B cell (primary cell): ENCODE measurements at regions of chr3 and their contacts with region 1.

Region 1: DNA sequence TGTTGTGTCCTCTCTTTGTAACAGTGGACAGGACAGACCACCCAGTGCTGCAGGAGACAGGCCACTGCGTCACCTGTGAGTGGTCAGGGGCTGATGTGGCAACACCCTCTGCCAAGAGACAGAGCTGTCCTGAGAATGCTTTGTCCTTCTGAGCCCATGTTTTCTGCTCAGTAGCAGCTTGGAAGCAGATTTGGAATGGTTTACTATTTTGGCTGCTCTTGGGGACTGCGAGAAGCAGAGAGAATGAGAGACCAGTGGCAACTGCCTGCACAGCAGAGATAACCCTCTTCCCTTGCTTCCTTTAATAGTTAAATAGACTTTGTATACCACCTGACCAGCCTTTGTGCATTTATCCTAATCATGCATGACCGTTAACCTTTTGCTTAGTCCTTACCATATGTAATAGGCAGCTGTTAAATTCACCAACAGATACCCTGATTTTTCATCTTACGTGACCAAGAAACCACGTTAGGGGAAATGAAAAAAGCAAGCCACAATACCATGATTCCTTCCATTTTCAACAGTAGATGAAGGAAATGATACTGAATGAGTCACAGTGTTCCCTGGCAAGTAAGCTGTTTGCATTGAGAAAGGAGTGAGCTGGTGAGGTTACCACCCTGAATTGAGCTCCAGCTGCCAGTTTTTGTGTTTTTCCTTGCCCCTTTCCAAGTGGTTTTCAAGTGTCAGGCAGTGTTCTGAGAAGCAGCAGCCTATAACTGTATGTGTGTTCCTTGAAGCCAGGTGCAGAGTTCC is 35.5 kb downstream of the B3GALNT1 start:
- DNase-seq: peak; percentile 63
- ATAC-seq: peak; percentile 92
- H3K4me3 ChIP-seq: no peak overlapping the region
- H3K4me3 Mint-ChIP-seq: peak overlapping the region; percentile 64
- H3K27ac ChIP-seq: peak overlapping the region in 1 of 2 donors; percentile 45
- H3K27ac Mint-ChIP-seq: peak overlapping the region; percentile 73
- H3K4me1 ChIP-seq: peaks cover 39 to 43% of the 10 kb centered on the region in 2 donors
- H3K4me1 Mint-ChIP-seq: peaks cover 46% of the 10 kb centered on the region
- H3K27me3 ChIP-seq: no peaks in the 10 kb centered on the region
- H3K27me3 Mint-ChIP-seq: no peaks in the 10 kb centered on the region
- CTCF ChIP-seq: no peak

Region 2: GRCh38 chr3:160399125-160400029 is 670.3 kb before region 1 on chr3 and contains the starts of genes IFT80 and SMC4:
- CTCF ChIA-PET with region 1: no interaction called
- POLR2A ChIA-PET with region 1: no interaction called
- intact Hi-C with region 1: no loop called
- DNase-seq: peak; percentile 97
- ATAC-seq: peak; percentile 96
- H3K4me3 ChIP-seq: peak within 1 kb of the TSS; percentile 71 to 97 (median 85)
- H3K4me3 Mint-ChIP-seq: peak within 1 kb of the TSS; percentile 98
- H3K27ac ChIP-seq: peak within 1 kb of the TSS; percentile 69 to 97
- H3K27ac Mint-ChIP-seq: peak within 1 kb of the TSS; percentile 98
- H3K4me1 ChIP-seq: peaks cover 26 to 45% of the 10 kb centered on the region in 2 donors
- H3K4me1 Mint-ChIP-seq: peaks cover 43% of the 10 kb centered on the region
- H3K27me3 ChIP-seq: peaks cover 0 to 25% (median 7%) of the 10 kb centered on the region in 4 experiments
- H3K27me3 Mint-ChIP-seq: no peaks in the 10 kb centered on the region
- CTCF ChIP-seq: no peak
- total RNA-seq, gene IFT80: 44.1 and 47.0 TPM in 2 replicates
- total RNA-seq, gene SMC4: 53.8 and 55.1 TPM in 2 replicates

Region 3: GRCh38 chr3:160601288-160601687 is 468.4 kb before region 1 on chr3:
- CTCF ChIA-PET with region 1: no interaction called
- POLR2A ChIA-PET with region 1: no interaction called
- intact Hi-C with region 1: no loop called
- DNase-seq: no peak
- ATAC-seq: no peak
- H3K4me3 ChIP-seq: no peak overlapping the region
- H3K4me3 Mint-ChIP-seq: no peak overlapping the region
- H3K27ac ChIP-seq: no peak overlapping the region
- H3K27ac Mint-ChIP-seq: no peak overlapping the region
- H3K4me1 ChIP-seq: no peaks in the 10 kb centered on the region
- H3K4me1 Mint-ChIP-seq: no peaks in the 10 kb centered on the region
- H3K27me3 ChIP-seq: no peaks in the 10 kb centered on the region
- H3K27me3 Mint-ChIP-seq: peaks cover 14% of the 10 kb centered on the region
- CTCF ChIP-seq: no peak

Region 4: GRCh38 chr3:160754855-160755747 is 314.6 kb before region 1 on chr3:
- CTCF ChIA-PET with region 1: no interaction called
- POLR2A ChIA-PET with region 1: no interaction called
- intact Hi-C with region 1: loop called (anchors 10 kb)
- DNase-seq: peak; percentile 93
- ATAC-seq: peak; percentile 81
- H3K4me3 ChIP-seq: peak overlapping the region; percentile 68 to 86 (median 81)
- H3K4me3 Mint-ChIP-seq: peak overlapping the region; percentile 98
- H3K27ac ChIP-seq: peak overlapping the region; percentile 72 to 82
- H3K27ac Mint-ChIP-seq: peak overlapping the region; percentile 95
- H3K4me1 ChIP-seq: peaks cover 25% of the 10 kb centered on the region in 2 donors
- H3K4me1 Mint-ChIP-seq: peaks cover 31% of the 10 kb centered on the region
- H3K27me3 ChIP-seq: peaks cover 0 to 11% (median 4%) of the 10 kb centered on the region in 4 experiments
- H3K27me3 Mint-ChIP-seq: peaks cover 21% of the 10 kb centered on the region
- CTCF ChIP-seq: no peak

Region 5: GRCh38 chr3:161035711-161036110 is 34.0 kb before region 1 on chr3:
- CTCF ChIA-PET with region 1: no interaction called
- POLR2A ChIA-PET with region 1: no interaction called
- intact Hi-C with region 1: loop called (anchors 5 kb)
- DNase-seq: peak; percentile 6
- ATAC-seq: no peak
- H3K4me3 ChIP-seq: peak overlapping the region in 1 of 5 experiments; percentile 15
- H3K4me3 Mint-ChIP-seq: peak overlapping the region; percentile 68
- H3K27ac ChIP-seq: no peak overlapping the region
- H3K27ac Mint-ChIP-seq: peak overlapping the region; percentile 4
- H3K4me1 ChIP-seq: peaks cover 0 to 11% of the 10 kb centered on the region in 2 donors
- H3K4me1 Mint-ChIP-seq: peaks cover 17% of the 10 kb centered on the region
- H3K27me3 ChIP-seq: no peaks in the 10 kb centered on the region
- H3K27me3 Mint-ChIP-seq: peaks cover 4% of the 10 kb centered on the region
- CTCF ChIP-seq: no peak

Region 6: DNA sequence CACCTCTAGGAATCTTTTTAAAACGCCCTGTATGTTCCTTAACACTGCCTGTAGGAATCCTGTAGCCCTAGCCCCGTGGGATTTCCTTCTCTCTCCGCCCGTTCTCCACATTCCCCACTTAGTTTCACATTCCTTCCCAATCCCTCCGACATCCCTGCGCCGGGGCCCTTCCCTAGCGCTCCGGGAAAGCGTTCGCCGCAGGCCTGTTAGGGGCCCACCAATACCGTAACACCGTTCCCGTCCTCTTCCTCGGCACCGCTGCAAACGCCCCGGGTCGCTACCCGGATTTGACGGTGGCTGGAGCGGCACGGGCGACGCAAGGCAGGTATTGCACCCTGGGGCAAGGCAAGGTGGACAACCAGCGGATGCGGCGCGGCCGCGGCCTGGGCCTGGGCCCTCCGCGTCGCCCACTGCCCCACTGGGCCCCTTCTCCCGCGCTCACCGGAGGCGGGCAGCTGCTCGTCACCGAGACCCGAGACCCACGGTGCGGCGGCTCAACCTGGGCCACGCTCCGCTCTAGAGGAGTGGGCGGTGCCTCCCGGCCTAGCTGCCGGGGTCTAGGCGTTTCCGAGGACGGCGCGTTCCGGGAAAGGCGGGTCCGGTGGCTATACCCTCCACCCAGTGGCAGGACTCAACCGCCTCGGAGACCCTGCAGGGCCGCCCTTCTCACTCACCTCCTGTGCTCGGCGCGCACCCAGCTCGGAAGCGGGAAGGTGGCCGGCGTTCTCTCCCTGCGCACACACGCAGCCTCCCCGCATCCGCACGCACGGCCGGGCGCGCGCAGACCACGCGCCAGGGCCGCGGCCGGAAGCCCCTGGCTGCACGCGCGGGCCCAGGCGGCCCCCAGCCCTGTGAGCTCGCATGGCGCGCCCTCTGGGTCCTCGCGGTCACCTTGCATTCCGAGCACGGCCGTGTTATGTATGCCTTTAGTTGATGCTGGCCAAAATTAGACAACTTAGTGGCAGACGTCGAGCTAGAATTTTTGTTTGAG is 35.2 kb after region 1 on chr3 and contains the start of gene B3GALNT1:
- CTCF ChIA-PET with region 1: no interaction called
- POLR2A ChIA-PET with region 1: no interaction called
- intact Hi-C with region 1: loop called (anchors 5 kb)
- DNase-seq: peak; percentile 50
- ATAC-seq: peak; percentile 81
- H3K4me3 ChIP-seq: peak within 1 kb of the TSS; percentile 21 to 70 (median 53)
- H3K4me3 Mint-ChIP-seq: peak within 1 kb of the TSS; percentile 83
- H3K27ac ChIP-seq: no peak within 1 kb of the TSS
- H3K27ac Mint-ChIP-seq: peak within 1 kb of the TSS; percentile 7
- H3K4me1 ChIP-seq: peaks cover 6 to 10% of the 10 kb centered on the region in 2 donors
- H3K4me1 Mint-ChIP-seq: peaks cover 12% of the 10 kb centered on the region
- H3K27me3 ChIP-seq: peaks cover 0 to 6% (median 2%) of the 10 kb centered on the region in 4 experiments
- H3K27me3 Mint-ChIP-seq: peaks cover 11% of the 10 kb centered on the region
- CTCF ChIP-seq: no peak
- total RNA-seq, gene B3GALNT1: 6.4 and 9.8 TPM in 2 replicates

Region 7: DNA sequence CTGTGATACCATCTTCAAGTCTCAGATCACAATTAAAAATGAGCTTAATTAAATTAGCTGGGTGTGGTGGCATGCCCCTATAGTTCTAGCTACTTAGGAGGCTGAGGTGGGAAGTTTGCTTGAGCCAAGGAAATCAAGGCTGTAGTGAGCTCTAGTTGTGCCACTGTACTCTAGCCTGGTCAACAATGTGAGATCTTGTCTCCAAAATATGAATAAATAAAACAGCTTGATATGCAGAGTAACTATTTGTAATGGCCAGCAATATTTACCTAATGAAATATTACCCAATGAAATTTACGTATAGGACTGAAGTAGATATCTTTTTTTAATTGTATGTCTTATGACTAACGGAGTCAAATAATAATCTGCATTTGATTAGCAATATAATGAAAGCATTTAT is 1388.7 kb after region 1 on chr3:
- CTCF ChIA-PET with region 1: no interaction called
- POLR2A ChIA-PET with region 1: no interaction called
- intact Hi-C with region 1: no loop called
- DNase-seq: no peak
- ATAC-seq: no peak
- H3K4me3 ChIP-seq: no peak overlapping the region
- H3K4me3 Mint-ChIP-seq: no peak overlapping the region
- H3K27ac ChIP-seq: no peak overlapping the region
- H3K27ac Mint-ChIP-seq: no peak overlapping the region
- H3K4me1 ChIP-seq: no peaks in the 10 kb centered on the region
- H3K4me1 Mint-ChIP-seq: no peaks in the 10 kb centered on the region
- H3K27me3 ChIP-seq: no peaks in the 10 kb centered on the region
- H3K27me3 Mint-ChIP-seq: no peaks in the 10 kb centered on the region
- CTCF ChIP-seq: no peak